ENCODE measurements at regions of chr3 and their contacts with region 1.

Region 1: GRCh38 chr3:47540281-47540680 is 26.8 kb upstream of the ELP6 start:
- DNase-seq: no peak
- H3K4me3 ChIP-seq: no peak overlapping the region
- H3K27ac ChIP-seq: no peak overlapping the region
- H3K4me1 ChIP-seq: no peaks in the 10 kb centered on the region; the same call in 1 of the 2 replicates
- H3K27me3 ChIP-seq: no peaks in the 10 kb centered on the region
- CTCF ChIP-seq: no peak

Region 2: GRCh38 chr3:47553407-47553806 is 13.1 kb after region 1 on chr3:
- CTCF ChIA-PET with region 1: no interaction called
- POLR2A ChIA-PET with region 1: interaction called, 11 read pairs
- intact Hi-C with region 1: no loop called
- DNase-seq: no peak
- H3K4me3 ChIP-seq: no peak overlapping the region
- H3K27ac ChIP-seq: no peak overlapping the region
- H3K4me1 ChIP-seq: no peaks in the 10 kb centered on the region
- H3K27me3 ChIP-seq: no peaks in the 10 kb centered on the region
- CTCF ChIP-seq: no peak